ENCODE measurements at regions of chr12 and their contacts with region 1.

Region 1: DNA sequence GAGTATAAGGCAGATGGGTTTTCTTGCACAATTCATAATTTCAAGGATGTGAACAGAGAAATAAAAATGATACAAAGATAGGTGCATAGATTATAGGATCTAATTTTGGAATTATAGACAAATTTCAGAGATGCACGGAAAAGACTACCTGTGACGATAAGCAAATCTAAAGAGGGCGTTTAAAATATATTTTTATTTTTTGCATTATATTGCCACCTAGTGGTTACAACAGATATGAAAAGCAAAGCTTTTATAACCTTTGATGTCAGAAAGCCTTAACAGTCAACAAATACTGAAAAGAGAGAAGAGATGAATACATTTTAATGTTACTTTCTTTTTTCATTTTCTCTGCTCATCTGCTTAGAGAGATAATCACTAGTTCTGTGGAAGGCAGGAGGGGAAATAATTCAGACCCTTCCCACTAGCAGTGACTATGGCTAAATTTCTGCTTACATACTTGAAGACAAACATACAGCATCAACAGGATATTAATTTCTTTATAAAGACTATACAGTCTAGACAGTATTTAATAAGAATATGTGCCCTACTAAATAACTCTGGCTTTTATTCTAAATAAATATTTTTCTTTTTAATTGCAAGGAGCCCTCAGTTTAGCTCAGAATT is 46.3 kb downstream of the NTS start:
- DNase-seq: no peak
- H3K4me3 Mint-ChIP-seq: no peak overlapping the region
- H3K27ac Mint-ChIP-seq: no peak overlapping the region
- H3K4me1 Mint-ChIP-seq: no peaks in the 10 kb centered on the region
- H3K27me3 Mint-ChIP-seq: peaks cover 2% of the 10 kb centered on the region

Region 2: DNA sequence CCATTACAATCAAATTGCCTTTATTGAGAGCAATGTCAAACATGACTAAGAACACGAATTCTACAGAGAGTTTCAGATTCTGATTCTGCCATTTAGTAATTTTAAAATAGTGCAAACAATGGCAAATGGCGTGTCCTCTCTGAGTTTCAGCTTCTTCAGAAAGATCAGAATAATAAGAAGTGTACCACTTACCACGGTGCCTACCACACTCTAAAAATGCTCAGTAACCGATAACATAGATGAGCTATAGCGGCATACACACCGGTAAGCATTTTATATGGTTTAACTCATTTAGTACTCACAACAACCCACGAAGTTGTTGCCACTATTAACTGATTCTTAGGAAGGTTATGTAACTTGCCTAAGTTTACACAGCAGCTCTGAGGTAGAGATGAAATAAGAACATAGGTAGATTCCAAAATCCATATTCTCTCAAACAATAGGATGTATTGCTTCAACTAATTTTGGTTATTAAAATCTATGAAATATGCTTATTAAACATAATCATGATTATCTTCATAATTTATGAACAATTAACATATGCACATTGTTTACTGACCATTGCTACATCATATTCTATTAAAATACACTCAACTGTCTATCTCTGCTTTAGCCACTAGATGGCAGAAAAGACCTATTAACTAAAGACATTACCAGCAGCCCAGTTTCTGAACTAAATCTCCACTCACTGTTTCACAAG is 1046.2 kb before region 1 on chr12:
- intact Hi-C with region 1: loop called (anchors 2 kb)
- DNase-seq: no peak
- H3K4me3 Mint-ChIP-seq: no peak overlapping the region
- H3K27ac Mint-ChIP-seq: no peak overlapping the region
- H3K4me1 Mint-ChIP-seq: no peaks in the 10 kb centered on the region
- H3K27me3 Mint-ChIP-seq: no peaks in the 10 kb centered on the region

Region 3: DNA sequence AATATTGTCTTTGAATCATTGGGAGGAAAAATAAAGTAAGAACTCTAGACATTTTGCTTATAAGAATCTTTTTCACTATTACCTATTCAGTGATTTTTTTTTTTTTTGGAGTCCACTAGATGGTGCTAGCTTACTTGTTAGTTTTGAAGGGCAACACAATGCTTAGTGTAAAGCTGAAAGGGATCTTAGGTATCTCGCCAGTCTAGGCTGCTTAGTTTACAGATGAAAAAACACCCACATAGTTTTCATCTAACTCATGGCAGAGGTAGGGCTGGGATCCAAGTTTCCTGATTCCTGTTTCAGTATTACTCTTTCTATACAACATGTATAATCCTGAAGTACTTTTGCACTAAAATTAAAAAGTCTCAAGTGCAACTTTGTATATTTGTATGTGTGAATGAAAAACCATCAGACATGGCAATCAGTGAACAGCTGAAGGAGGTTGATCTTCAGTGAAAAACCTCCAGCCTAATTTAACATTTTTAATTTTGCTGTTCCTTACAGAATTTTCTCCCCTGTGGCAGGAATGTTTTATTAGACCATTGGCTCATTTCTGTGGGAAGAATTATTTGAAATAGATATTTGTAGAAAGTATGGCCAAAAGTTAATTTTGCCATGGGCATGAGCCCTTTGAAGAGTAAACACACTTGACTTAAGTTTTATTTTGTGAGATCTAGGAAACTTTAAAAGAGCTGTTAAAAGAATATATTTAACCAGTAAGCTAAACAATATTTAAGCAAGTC is 843.6 kb before region 1 on chr12:
- intact Hi-C with region 1: loop called (anchors 2 kb)
- DNase-seq: no peak
- H3K4me3 Mint-ChIP-seq: no peak overlapping the region
- H3K27ac Mint-ChIP-seq: no peak overlapping the region
- H3K4me1 Mint-ChIP-seq: no peaks in the 10 kb centered on the region
- H3K27me3 Mint-ChIP-seq: no peaks in the 10 kb centered on the region

Region 4: GRCh38 chr12:85424581-85425348 is 495.7 kb before region 1 on chr12:
- intact Hi-C with region 1: loop called (anchors 1 kb)
- DNase-seq: no peak
- H3K4me3 Mint-ChIP-seq: no peak overlapping the region
- H3K27ac Mint-ChIP-seq: no peak overlapping the region
- H3K4me1 Mint-ChIP-seq: no peaks in the 10 kb centered on the region
- H3K27me3 Mint-ChIP-seq: no peaks in the 10 kb centered on the region

Region 5: GRCh38 chr12:85468356-85469157 is 451.9 kb before region 1 on chr12:
- intact Hi-C with region 1: loop called (anchors 1 kb)
- DNase-seq: peak; percentile 13
- H3K4me3 Mint-ChIP-seq: peak overlapping the region; percentile 74
- H3K27ac Mint-ChIP-seq: no peak overlapping the region
- H3K4me1 Mint-ChIP-seq: peaks cover 17% of the 10 kb centered on the region
- H3K27me3 Mint-ChIP-seq: no peaks in the 10 kb centered on the region

Region 6: DNA sequence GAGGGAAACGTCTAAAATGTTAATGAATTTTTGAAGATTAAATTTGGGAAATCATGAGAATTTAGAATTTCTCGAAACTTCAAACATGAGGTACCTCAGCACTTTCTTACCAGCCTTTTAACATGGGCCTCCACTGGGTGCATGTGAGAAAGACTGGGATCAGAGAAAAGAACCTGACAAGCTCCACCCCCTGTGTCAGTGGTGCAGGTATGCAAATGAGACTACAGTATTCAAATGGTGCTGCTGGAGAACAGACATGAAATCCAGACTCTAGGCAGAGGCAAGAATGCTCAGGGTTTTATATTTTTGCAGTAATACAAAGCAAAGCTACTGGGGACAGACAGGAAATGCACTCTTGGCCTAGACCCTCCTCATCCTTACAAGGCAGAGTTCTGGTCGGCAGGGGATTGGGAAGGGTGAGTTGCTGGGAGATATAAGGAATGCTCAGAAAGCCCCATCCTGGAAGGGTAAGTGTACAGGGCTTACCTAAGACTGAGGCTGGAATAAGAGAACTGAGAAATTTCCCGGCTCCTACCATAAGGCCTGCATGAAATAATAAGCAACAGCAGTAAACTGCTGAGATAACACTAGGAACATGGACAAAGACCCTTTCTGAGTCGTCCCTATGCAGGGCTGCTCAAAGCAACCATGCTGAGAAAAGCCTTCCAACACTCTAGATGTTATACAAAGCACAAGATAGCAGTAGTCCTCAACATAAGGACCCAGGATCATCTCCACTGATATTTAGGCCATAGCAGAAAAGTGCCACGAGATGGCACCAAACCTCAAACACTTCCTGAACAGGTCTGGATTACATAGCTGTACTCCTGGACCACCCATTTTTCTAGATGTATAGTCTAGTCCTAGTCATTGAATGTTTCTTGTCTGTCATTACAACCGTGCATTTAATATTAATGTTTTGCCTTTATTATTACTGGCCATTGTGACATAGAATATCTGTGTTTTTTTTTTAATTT is 345.0 kb before region 1 on chr12:
- intact Hi-C with region 1: loop called (anchors 5 kb)
- DNase-seq: no peak
- H3K4me3 Mint-ChIP-seq: no peak overlapping the region
- H3K27ac Mint-ChIP-seq: no peak overlapping the region
- H3K4me1 Mint-ChIP-seq: no peaks in the 10 kb centered on the region
- H3K27me3 Mint-ChIP-seq: no peaks in the 10 kb centered on the region

Region 7: GRCh38 chr12:85855305-85855704 is 65.1 kb before region 1 on chr12:
- intact Hi-C with region 1: no loop called
- DNase-seq: no peak
- H3K4me3 Mint-ChIP-seq: no peak overlapping the region
- H3K27ac Mint-ChIP-seq: no peak overlapping the region
- H3K4me1 Mint-ChIP-seq: no peaks in the 10 kb centered on the region
- H3K27me3 Mint-ChIP-seq: no peaks in the 10 kb centered on the region

Region 8: GRCh38 chr12:85951823-85952222 is 31.4 kb after region 1 on chr12:
- intact Hi-C with region 1: no loop called
- DNase-seq: no peak
- H3K4me3 Mint-ChIP-seq: no peak overlapping the region
- H3K27ac Mint-ChIP-seq: no peak overlapping the region
- H3K4me1 Mint-ChIP-seq: no peaks in the 10 kb centered on the region
- H3K27me3 Mint-ChIP-seq: no peaks in the 10 kb centered on the region

Region 9: GRCh38 chr12:87107270-87107669 is 1186.8 kb after region 1 on chr12:
- intact Hi-C with region 1: no loop called
- DNase-seq: no peak
- H3K4me3 Mint-ChIP-seq: no peak overlapping the region
- H3K27ac Mint-ChIP-seq: no peak overlapping the region
- H3K4me1 Mint-ChIP-seq: no peaks in the 10 kb centered on the region
- H3K27me3 Mint-ChIP-seq: no peaks in the 10 kb centered on the region

Region 10: DNA sequence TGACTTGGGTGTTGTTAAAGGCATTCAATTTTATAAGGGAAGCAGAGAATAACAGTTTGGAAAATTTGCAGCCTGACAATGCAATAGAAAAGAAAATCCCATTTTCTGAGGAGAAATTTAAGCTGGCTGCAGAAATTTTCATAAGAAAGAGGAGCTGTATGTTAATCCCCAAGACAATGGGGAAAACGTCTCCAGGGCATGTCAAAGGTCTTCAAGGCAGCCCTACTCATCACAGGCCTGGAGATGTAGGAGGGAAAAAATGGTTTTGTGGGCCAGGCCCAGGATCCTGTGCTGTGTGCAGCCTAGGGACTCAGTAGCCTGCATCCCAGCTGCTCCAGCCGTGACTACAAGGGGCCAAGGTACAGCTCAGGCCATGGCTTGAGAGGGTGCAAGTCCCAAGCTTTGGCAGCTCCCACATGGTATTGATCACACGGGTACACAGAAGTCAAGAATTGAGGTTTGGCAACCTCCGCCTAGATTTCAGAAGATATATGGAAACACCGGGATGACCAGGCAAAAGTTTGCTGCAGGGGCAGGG is 1262.3 kb after region 1 on chr12:
- intact Hi-C with region 1: no loop called
- DNase-seq: no peak
- H3K4me3 Mint-ChIP-seq: no peak overlapping the region
- H3K27ac Mint-ChIP-seq: no peak overlapping the region
- H3K4me1 Mint-ChIP-seq: no peaks in the 10 kb centered on the region
- H3K27me3 Mint-ChIP-seq: no peaks in the 10 kb centered on the region

Region 11: GRCh38 chr12:87848248-87848868 is 1927.9 kb after region 1 on chr12:
- intact Hi-C with region 1: loop called (anchors 5 kb)
- DNase-seq: no peak
- H3K4me3 Mint-ChIP-seq: no peak overlapping the region
- H3K27ac Mint-ChIP-seq: no peak overlapping the region
- H3K4me1 Mint-ChIP-seq: no peaks in the 10 kb centered on the region
- H3K27me3 Mint-ChIP-seq: no peaks in the 10 kb centered on the region

Measured in activated T-helper 1 cell treated with anti-CD3 and anti-CD28 coated beads, Interleukin-12 subunit alpha, Interleukin-12 subunit beta, Interleukin-2, Interleukin-4 antibody, amounts not matched to agents 30 ng/mL and 10 ng/mL and 1 ng/mL, durations not matched to agents 14 hours and 24 hours and 36 hours (primary cell).